Breast epithelium (tissue), 4 donors: ENCODE measurements at regions of chrX and their contacts with region 1.

Region 1: GRCh38 chrX:133254666-133255065 is 36.5 kb upstream of the TFDP3 start:
- DNase-seq: no peak
- H3K4me3 ChIP-seq: no peak overlapping the region
- H3K27ac ChIP-seq: no peak overlapping the region
- H3K4me1 ChIP-seq: no peaks in the 10 kb centered on the region
- H3K27me3 ChIP-seq: peaks cover 0 to 37% of the 10 kb centered on the region in 2 donors
- CTCF ChIP-seq: no peak
- POLR2A ChIP-seq: no peak

Region 2: DNA sequence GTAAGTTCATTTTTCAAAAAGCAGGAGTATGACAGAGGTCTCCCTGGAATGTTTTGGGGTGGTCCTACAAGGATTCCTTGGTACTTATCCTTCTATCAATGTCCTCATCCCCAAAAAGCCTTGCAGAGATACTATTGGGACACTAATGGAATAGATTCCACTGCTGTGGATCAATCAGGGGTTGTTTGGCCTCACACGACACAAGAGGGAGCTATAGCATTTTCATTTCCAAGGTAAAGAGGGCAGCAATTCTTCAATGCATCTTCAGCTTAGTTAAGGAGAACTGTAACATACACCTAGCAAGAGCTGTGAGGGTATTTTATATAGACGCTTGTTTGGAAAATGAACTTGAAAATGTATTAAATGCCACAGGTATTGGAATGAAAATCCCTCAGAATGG is 208.7 kb before region 1 on chrX:
- intact Hi-C with region 1: no loop called
- DNase-seq: no peak
- H3K4me3 ChIP-seq: no peak overlapping the region
- H3K27ac ChIP-seq: no peak overlapping the region
- H3K4me1 ChIP-seq: no peaks in the 10 kb centered on the region
- H3K27me3 ChIP-seq: peaks cover 0 to 45% of the 10 kb centered on the region in 2 donors
- CTCF ChIP-seq: no peak
- POLR2A ChIP-seq: no peak

Region 3: GRCh38 chrX:133213117-133213516 is 41.5 kb before region 1 on chrX:
- intact Hi-C with region 1: loop called (anchors 2 kb)
- DNase-seq: no peak
- H3K4me3 ChIP-seq: no peak overlapping the region
- H3K27ac ChIP-seq: no peak overlapping the region
- H3K4me1 ChIP-seq: no peaks in the 10 kb centered on the region
- H3K27me3 ChIP-seq: peaks cover 0 to 9% of the 10 kb centered on the region in 2 donors
- CTCF ChIP-seq: no peak
- POLR2A ChIP-seq: no peak